ENCODE measurements at regions of chr17 and their contacts with region 1.

Region 1: GRCh38 chr17:2982854-2983253 is 80.6 kb downstream of the OR1D5 start:
- DNase-seq: no peak
- H3K4me3 ChIP-seq: no peak overlapping the region
- H3K27ac ChIP-seq: no peak overlapping the region
- H3K4me1 ChIP-seq: peaks cover 8% of the 10 kb centered on the region
- H3K27me3 ChIP-seq: no peaks in the 10 kb centered on the region
- CTCF ChIP-seq: no peak

Region 2: DNA sequence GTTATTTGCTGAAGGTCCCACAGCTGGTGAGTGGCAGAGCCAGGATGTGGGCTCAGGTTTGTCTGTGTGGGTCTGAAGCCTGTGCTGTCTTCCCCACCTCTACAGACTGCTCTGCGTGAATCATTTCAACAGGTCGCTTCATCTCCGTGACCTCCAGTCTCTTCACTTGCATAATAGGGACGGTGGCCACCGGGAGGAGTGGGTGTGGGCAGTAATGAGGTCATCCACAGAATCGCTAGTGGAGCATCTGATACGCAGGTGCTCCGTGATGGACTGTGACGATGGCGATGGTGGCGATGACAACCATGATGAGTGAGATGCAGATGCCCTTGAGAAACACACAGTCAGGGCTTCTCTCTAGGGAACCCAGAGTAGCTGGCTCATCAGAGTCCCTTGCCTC is 66.4 kb before region 1 on chr17:
- CTCF ChIA-PET with region 1: no interaction called
- dilution Hi-C with region 1: loop called (anchors 5 kb)
- in situ Hi-C with region 1: no loop called
- intact Hi-C with region 1: no loop called
- DNase-seq: no peak
- H3K4me3 ChIP-seq: no peak overlapping the region
- H3K27ac ChIP-seq: no peak overlapping the region
- H3K4me1 ChIP-seq: no peaks in the 10 kb centered on the region
- H3K27me3 ChIP-seq: no peaks in the 10 kb centered on the region
- CTCF ChIP-seq: no peak

Region 3: GRCh38 chr17:2940352-2940751 is 42.5 kb before region 1 on chr17:
- CTCF ChIA-PET with region 1: no interaction called
- dilution Hi-C with region 1: no loop called
- in situ Hi-C with region 1: no loop called
- intact Hi-C with region 1: no loop called
- DNase-seq: no peak
- H3K4me3 ChIP-seq: no peak overlapping the region
- H3K27ac ChIP-seq: no peak overlapping the region
- H3K4me1 ChIP-seq: peaks cover 4% of the 10 kb centered on the region
- H3K27me3 ChIP-seq: no peaks in the 10 kb centered on the region
- CTCF ChIP-seq: no peak

Measured in mammary epithelial cell (primary cell).